SK-MEL-5 (cell line): ENCODE measurements at regions of chr2 and their contacts with region 1.

Region 1: DNA sequence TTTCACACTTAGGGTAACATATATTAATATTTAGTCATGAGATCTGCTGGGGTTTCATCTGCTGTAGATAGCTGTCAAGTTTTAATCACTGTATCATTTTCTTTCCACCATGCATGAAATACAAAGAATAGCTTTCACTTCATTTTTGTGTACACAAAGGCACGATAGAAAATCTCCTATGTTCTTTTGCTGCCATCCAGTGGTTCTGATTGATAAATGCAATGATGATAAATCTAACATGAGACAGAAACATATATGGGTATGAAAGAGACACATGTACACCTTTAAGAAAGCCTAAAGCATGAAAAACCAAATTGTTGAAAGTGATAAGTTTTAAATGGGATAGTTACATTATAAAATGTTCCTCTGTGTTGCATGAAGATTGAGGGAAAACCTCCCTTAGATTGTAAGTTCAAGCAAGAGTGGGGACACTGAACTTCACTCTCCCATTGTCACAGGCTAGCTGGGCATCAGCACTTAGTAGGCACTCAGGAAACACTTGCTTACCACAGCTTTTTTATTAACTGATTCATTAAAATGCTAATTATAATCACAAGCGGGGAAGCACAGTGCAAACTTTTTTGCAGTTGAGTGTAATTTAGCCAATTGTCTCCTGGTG is 31.2 kb downstream of the C1D start:
- DNase-seq: peak; percentile 89

Region 2: GRCh38 chr2:67733517-67733916 is 298.1 kb before region 1 on chr2:
- in situ Hi-C with region 1: loop called (anchors 25 kb)
- DNase-seq: peak; percentile 80

Region 3: DNA sequence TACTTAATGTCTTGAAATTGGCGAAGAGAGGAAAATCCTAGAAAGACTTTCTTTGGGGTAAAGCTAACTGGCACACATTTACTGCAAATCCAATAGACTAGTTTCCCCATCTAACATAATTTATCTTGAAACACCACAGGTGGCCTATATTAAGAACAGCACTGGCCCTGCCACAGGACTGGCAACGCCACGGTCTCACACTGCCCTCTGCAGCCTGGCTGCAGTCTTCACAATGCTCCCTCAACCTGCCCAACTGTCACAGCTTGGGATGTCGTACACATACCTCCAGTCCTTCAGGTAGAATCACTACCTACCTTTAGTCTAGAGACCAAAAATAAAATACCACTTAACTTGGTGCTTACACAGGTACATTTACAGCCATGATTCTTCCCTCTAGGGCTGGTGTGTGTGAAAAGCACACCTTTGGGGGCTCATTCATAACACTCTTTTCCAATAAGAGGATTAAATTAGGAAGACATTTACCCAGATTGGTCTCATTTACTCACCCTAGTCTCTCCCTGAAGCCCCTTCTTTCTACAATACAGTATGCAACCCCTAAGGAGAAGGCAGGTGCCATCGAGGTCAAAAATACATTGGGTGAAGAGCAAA is 191.1 kb before region 1 on chr2:
- in situ Hi-C with region 1: loop called (anchors 25 kb)
- DNase-seq: peak; percentile 85

Region 4: GRCh38 chr2:67945940-67946339 is 85.7 kb before region 1 on chr2:
- in situ Hi-C with region 1: no loop called
- DNase-seq: peak; percentile 42

Region 5: DNA sequence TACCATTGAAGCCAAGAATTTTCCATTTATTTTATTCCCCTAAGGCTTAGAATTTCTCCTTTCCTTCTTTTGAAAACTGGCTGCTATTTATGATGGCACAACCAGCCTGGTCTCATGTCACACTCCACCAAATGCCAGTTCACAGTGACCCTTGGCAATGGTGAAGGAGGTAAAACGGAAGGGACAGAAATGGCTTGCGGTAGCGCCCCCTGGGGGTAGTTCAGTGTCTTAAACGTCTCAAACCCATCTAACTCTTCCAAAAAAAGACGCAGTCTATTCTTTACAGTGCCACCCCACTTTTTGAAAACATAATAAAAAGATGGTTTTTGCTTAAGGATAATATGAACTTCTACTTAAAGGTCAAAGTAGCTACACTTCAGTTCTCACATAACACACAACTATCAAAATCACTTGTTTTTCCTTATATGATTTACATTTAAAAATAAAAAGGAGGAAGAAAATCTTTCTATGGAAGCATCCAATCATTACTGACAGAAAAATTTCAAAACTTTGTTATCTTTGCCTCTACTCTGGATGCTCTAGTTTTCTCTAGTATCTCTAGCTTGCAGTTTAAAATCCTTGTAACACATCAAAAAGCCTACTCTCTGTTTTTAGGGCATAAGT is 154.0 kb after region 1 on chr2:
- in situ Hi-C with region 1: no loop called
- DNase-seq: peak; percentile 79

Region 6: GRCh38 chr2:68569604-68570003 is 538.0 kb after region 1 on chr2:
- in situ Hi-C with region 1: no loop called
- DNase-seq: no peak